ENCODE measurements at regions of chr19 and their contacts with region 1.

Region 1: GRCh38 chr19:57320180-57321084 is at the start of gene ZNF543:
- DNase-seq: peak; percentile 77
- ATAC-seq: peak; percentile 98
- H3K4me3 ChIP-seq: peak within 1 kb of the TSS; percentile 86
- H3K27ac ChIP-seq: peak within 1 kb of the TSS; percentile 90
- H3K4me1 ChIP-seq: peaks cover 3% of the 10 kb centered on the region; the same call in 1 of the 2 replicates
- H3K27me3 ChIP-seq: no peaks in the 10 kb centered on the region
- CTCF ChIP-seq: no peak
- EP300 ChIP-seq: no peak
- POLR2A ChIP-seq: peak; percentile 93
- RAD21 ChIP-seq: no peak
- polyA plus RNA-seq, gene ZNF543: 0.53 to 0.74 TPM

Region 2: GRCh38 chr19:57240311-57241090 is 79.9 kb before region 1 on chr19 and contains the start of gene ZNF805:
- CTCF ChIA-PET with region 1: no interaction called
- POLR2A ChIA-PET with region 1: no interaction called
- RAD21 ChIA-PET with region 1: no interaction called
- SMC1A ChIA-PET with region 1: interaction called, 3 read pairs
- in situ Hi-C with region 1: no loop called
- intact Hi-C with region 1: loop called (anchors 1 kb)
- DNase-seq: peak; percentile 74
- ATAC-seq: peak; percentile 97
- H3K4me3 ChIP-seq: peak within 1 kb of the TSS; percentile 83
- H3K27ac ChIP-seq: peak within 1 kb of the TSS; percentile 73
- H3K4me1 ChIP-seq: peaks cover 9% of the 10 kb centered on the region
- H3K27me3 ChIP-seq: no peaks in the 10 kb centered on the region
- CTCF ChIP-seq: no peak; a peak in 1 of 6 replicates
- EP300 ChIP-seq: no peak
- POLR2A ChIP-seq: peak; percentile 92
- RAD21 ChIP-seq: no peak
- polyA plus RNA-seq, gene ZNF805: 0.31 to 0.42 TPM